Activated B cell treated with CpG ODN at 0.5 μM for 24 hours (primary cell): ENCODE measurements at regions of chr20 and their contacts with region 1.

Region 1: GRCh38 chr20:62953839-62954703 is 1.6 kb downstream of the SLC17A9 start:
- DNase-seq: peak; percentile 76
- ATAC-seq: peak; percentile 87
- H3K4me3 Mint-ChIP-seq: peak overlapping the region; percentile 86
- H3K27ac Mint-ChIP-seq: peak overlapping the region; percentile 96
- H3K4me1 Mint-ChIP-seq: peaks cover 38% of the 10 kb centered on the region
- H3K27me3 Mint-ChIP-seq: no peaks in the 10 kb centered on the region
- CTCF ChIP-seq: no peak

Region 2: DNA sequence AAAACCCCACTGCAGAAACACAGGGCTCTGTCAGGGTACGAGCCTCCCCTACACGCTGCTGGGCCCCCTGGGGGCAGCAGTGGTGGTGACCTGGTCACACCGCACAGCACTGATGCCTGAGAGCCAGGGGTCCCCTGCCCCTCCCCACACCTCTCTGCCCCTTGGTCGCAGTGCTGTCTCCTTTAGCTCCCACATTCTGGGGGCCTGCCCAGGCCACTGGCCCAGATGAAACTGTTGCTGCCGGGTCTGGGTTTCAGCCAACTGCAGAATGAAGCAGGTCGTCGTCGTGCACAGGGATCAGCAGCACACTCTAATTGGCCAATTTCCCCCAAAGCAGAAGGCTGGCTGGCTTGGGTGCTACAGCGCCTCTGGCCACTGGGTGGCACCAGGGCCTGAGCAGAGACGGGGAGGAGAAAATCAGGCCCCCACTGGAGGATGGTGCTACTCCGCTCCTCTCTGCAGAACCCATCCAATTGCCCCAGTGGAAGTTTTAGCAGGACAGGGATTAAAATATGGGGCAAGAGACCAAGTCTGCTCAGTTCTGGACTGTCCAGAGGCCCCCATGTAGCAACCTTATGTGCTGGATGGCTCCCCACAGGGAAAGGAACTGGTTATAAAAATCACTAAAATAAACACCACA is 53.9 kb before region 1 on chr20:
- CTCF ChIA-PET with region 1: interaction called, 4 read pairs
- POLR2A ChIA-PET with region 1: interaction called, 4 read pairs
- intact Hi-C with region 1: loop called (anchors 1 kb)
- DNase-seq: peak; percentile 55
- ATAC-seq: peak; percentile 98
- H3K4me3 Mint-ChIP-seq: peak overlapping the region; percentile 46
- H3K27ac Mint-ChIP-seq: peak overlapping the region; percentile 35
- H3K4me1 Mint-ChIP-seq: peaks cover 25% of the 10 kb centered on the region
- H3K27me3 Mint-ChIP-seq: no peaks in the 10 kb centered on the region
- CTCF ChIP-seq: peak; percentile 81

Region 3: GRCh38 chr20:62926239-62927104 is 27.6 kb before region 1 on chr20 and contains the start of gene DIDO1:
- CTCF ChIA-PET with region 1: no interaction called
- POLR2A ChIA-PET with region 1: interaction called, 44 read pairs
- intact Hi-C with region 1: loop called (anchors 1 kb)
- DNase-seq: peak; percentile 90
- ATAC-seq: peak; percentile 87
- H3K4me3 Mint-ChIP-seq: peak within 1 kb of the TSS; percentile 97
- H3K27ac Mint-ChIP-seq: peak within 1 kb of the TSS; percentile 93
- H3K4me1 Mint-ChIP-seq: peaks cover 81% of the 10 kb centered on the region
- H3K27me3 Mint-ChIP-seq: no peaks in the 10 kb centered on the region
- CTCF ChIP-seq: no peak
- total RNA-seq, gene DIDO1: 79.2 and 89.1 TPM in 2 replicates

Region 4: GRCh38 chr20:62972270-62973032 is 18.4 kb after region 1 on chr20:
- CTCF ChIA-PET with region 1: interaction called, 14 read pairs
- POLR2A ChIA-PET with region 1: interaction called, 23 read pairs
- intact Hi-C with region 1: loop called (anchors 1 kb)
- DNase-seq: peak; percentile 82
- ATAC-seq: peak; percentile 99
- H3K4me3 Mint-ChIP-seq: peak overlapping the region; percentile 82
- H3K27ac Mint-ChIP-seq: peak overlapping the region; percentile 24
- H3K4me1 Mint-ChIP-seq: peaks cover 22% of the 10 kb centered on the region
- H3K27me3 Mint-ChIP-seq: peaks cover 24% of the 10 kb centered on the region
- CTCF ChIP-seq: no peak

Region 5: GRCh38 chr20:63009045-63009961 is 55.2 kb after region 1 on chr20:
- CTCF ChIA-PET with region 1: interaction called, 7 read pairs
- POLR2A ChIA-PET with region 1: no interaction called
- intact Hi-C with region 1: loop called (anchors 10 kb)
- DNase-seq: peak; percentile 86
- ATAC-seq: peak; percentile 86
- H3K4me3 Mint-ChIP-seq: peak overlapping the region; percentile 46
- H3K27ac Mint-ChIP-seq: no peak overlapping the region
- H3K4me1 Mint-ChIP-seq: peaks cover 26% of the 10 kb centered on the region
- H3K27me3 Mint-ChIP-seq: peaks cover 43% of the 10 kb centered on the region
- CTCF ChIP-seq: no peak

Region 6: DNA sequence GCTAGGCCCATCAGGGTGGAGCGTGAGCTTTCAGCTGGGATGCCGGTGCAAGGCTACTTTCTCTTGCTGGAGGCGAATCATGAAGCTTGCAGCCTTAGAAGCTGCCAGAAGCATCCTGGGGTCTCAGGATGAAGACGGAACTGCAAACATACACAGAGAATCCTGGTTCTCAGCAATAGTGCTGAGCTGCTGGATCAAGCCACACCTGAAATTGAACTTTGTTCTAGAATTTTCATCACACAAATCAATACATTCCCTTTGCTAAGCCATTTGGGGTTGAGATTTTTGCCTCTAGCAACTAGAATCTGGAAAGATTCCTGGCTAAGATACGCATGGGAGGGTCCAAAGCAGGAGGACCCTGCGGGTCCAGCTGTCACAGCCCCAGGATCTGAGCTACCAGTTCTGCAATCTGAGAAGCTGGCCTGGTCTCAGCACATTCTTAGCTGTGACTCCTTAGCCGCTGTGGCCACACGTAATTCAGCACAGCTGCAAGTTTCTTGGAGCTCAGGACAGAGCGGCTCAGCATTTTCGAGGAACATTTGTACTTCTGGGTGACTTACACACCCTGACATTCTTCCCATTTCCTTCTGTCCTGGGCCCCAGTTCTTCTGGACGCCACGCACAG is 311.9 kb after region 1 on chr20:
- CTCF ChIA-PET with region 1: no interaction called
- POLR2A ChIA-PET with region 1: no interaction called
- intact Hi-C with region 1: no loop called
- DNase-seq: no peak
- ATAC-seq: no peak
- H3K4me3 Mint-ChIP-seq: no peak overlapping the region
- H3K27ac Mint-ChIP-seq: no peak overlapping the region
- H3K4me1 Mint-ChIP-seq: no peaks in the 10 kb centered on the region
- H3K27me3 Mint-ChIP-seq: peaks cover 21% of the 10 kb centered on the region
- CTCF ChIP-seq: no peak